PC-9 (cell line): ENCODE measurements at regions of chr16 and their contacts with region 1.

Region 1: DNA sequence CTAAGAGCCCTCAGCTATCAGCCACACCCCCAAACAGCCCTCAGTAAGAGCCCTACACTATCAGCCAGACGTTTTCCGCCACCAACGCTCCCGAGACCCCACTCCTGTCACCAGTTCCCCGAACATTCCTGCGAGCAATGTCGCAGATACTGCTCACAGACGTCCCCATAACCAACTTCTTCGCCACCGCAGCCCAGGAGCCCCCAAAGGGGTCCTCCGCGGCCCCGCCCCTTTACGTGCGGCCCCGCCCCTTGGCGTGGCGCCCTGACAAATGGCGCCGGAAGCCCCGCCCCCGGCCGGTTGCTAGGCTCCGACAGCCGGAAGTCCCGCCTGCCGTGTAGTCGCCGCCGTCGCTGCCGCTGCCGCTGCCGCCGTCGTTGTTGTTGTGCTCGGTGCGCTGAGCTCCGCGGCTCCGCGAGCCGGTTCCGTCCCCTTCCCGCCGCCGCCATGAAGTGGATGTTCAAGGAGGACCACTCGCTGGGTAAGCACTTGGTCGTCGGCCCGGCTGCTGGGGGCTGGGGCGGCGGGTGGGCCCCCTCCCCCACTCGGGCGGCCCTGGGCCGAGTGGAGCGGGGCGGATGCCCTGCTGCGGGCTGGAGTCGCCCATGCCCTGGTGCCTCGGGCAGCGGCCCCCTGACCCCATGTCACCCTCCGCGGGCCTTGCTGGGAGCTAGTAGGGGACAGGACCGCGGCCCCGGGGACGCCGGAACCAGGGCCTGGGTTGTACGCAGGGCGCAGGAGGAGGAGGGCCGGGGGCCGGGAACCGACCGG is at the start of gene GABARAPL2:
- DNase-seq: peak; percentile 57 to 82
- H3K4me3 ChIP-seq: peak within 1 kb of the TSS; percentile 94
- H3K27ac ChIP-seq: no peak within 1 kb of the TSS
- H3K4me1 ChIP-seq: peaks cover 17% of the 10 kb centered on the region; the same call in 1 of the 2 replicates
- H3K27me3 ChIP-seq: no peaks in the 10 kb centered on the region
- CTCF ChIP-seq: no peak
- total RNA-seq, gene GABARAPL2: 86.1 and 103 TPM in 2 replicates

Region 2: GRCh38 chr16:75251280-75252048 is 314.8 kb before region 1 on chr16 and contains the start of gene BCAR1:
- CTCF ChIA-PET with region 1: no interaction called
- POLR2A ChIA-PET with region 1: no interaction called
- intact Hi-C with region 1: no loop called
- DNase-seq: peak; percentile 68 to 90
- H3K4me3 ChIP-seq: peak within 1 kb of the TSS; percentile 71
- H3K27ac ChIP-seq: peak within 1 kb of the TSS; percentile 54; the same call in 1 of the 2 replicates
- H3K4me1 ChIP-seq: peaks cover 54% of the 10 kb centered on the region
- H3K27me3 ChIP-seq: no peaks in the 10 kb centered on the region
- CTCF ChIP-seq: no peak
- total RNA-seq, gene BCAR1: 53.9 and 62.5 TPM in 2 replicates

Region 3: GRCh38 chr16:75471723-75472633 is 94.2 kb before region 1 on chr16:
- CTCF ChIA-PET with region 1: no interaction called
- POLR2A ChIA-PET with region 1: no interaction called
- intact Hi-C with region 1: loop called (anchors 1 kb)
- DNase-seq: peak; percentile 45 to 54
- H3K4me3 ChIP-seq: no peak overlapping the region
- H3K27ac ChIP-seq: no peak overlapping the region
- H3K4me1 ChIP-seq: 0 out of 2 replicates have a peak, but pooled peaks cover 5% of the 10 kb centered on the region
- H3K27me3 ChIP-seq: no peaks in the 10 kb centered on the region
- CTCF ChIP-seq: peak; percentile 81

Region 4: DNA sequence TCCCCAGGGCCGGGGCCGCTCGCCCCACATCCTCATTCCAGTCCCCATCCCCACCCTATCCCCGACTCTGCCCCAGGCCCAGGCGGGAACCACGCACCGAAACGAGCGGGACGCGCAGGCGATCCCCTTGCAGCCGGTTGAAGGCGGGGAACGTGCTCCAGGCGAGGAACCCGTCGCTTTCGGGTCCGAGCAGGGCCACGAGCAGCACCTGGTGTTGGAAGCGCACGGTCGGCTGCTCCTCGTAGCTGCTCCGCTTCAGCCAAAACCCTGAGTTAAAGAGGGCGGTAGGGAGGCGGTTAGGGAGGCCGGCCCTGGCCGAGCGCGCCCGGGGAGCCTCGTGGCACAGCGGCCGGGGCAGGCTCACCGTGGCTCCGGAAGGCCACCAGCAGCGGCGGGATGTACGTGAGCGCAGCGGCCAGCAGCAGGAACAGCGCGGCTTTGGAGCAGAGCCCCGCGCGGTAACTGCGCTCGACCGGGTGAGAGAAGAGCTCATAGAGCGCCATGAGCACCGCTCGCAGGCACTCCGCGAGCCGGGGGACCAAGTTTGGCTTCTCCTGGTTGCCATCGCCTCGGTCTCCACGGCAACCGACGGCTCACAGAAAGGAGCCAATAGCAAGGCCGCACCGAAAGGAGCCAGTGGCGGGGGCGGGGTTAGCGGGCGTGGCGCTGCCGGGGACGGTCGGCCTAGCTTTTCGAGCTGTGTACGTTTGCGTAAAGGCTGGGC is 10.4 kb before region 1 on chr16 and contains the start of gene TMEM231:
- CTCF ChIA-PET with region 1: no interaction called
- POLR2A ChIA-PET with region 1: no interaction called
- intact Hi-C with region 1: loop called (anchors 1 kb)
- DNase-seq: peak; percentile 88 to 91
- H3K4me3 ChIP-seq: peak within 1 kb of the TSS; percentile 100
- H3K27ac ChIP-seq: peak within 1 kb of the TSS; percentile 58
- H3K4me1 ChIP-seq: peaks cover 32% of the 10 kb centered on the region
- H3K27me3 ChIP-seq: no peaks in the 10 kb centered on the region
- CTCF ChIP-seq: no peak
- total RNA-seq, gene TMEM231: 17.7 and 18.8 TPM in 2 replicates